ENCODE measurements at regions of chr10 and their contacts with region 1.

Region 1: DNA sequence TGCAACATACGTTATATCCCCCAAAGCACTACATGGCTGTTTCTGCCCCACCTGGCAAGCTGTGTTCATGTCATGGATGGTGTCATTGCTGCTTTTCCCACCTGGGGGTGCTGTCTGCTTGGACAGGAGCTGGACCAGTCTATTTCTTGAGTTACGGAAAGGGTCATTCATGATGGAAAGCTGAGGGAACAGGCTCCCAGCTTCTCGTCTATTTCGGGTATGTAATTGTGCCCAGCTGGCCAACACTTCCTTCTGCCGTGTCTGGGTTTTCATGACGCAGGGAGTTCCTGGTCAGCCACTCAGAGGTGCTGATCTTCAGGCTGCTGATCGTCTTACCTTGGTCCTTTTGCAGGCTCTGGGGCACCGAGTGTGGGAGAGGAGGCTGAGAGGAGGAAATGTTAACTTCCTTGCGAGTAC is 8.6 kb downstream of the BTBD16 start:
- DNase-seq: no peak
- ATAC-seq: no peak
- H3K4me3 ChIP-seq: no peak overlapping the region
- H3K27ac ChIP-seq: no peak overlapping the region
- H3K4me1 ChIP-seq: no peaks in the 10 kb centered on the region
- H3K27me3 ChIP-seq: no peaks in the 10 kb centered on the region

Region 2: GRCh38 chr10:122142641-122143237 is 137.0 kb before region 1 on chr10:
- intact Hi-C with region 1: loop called in 1 of 2 experiments (anchors 10 kb)
- DNase-seq: peak in 1 of 2 donors; percentile 89
- ATAC-seq: peak; percentile 56
- H3K4me3 ChIP-seq: no peak overlapping the region
- H3K27ac ChIP-seq: peak overlapping the region in 1 of 2 donors; percentile 65
- H3K4me1 ChIP-seq: peaks cover 0 to 5% of the 10 kb centered on the region in 2 donors
- H3K27me3 ChIP-seq: no peaks in the 10 kb centered on the region

Measured in aorta (tissue), 5 donors.